CD4-positive, alpha-beta memory T cell (primary cell): ENCODE measurements at regions of chr3 and their contacts with region 1.

Region 1: GRCh38 chr3:185942907-185943759 is 5.3 kb upstream of the TRA2B start:
- DNase-seq: peak; percentile 81 to 84 (median 83)
- H3K4me3 ChIP-seq: peak overlapping the region in 1 of 2 donors; percentile 55
- H3K4me3 Mint-ChIP-seq: peak overlapping the region; percentile 43 to 76 (median 66)
- H3K27ac ChIP-seq: no peak overlapping the region
- H3K27ac Mint-ChIP-seq: peak overlapping the region in 5 of 7 donors; percentile 32 to 75 (median 62)
- H3K4me1 ChIP-seq: peaks cover 14% of the 10 kb centered on the region
- H3K4me1 Mint-ChIP-seq: peaks cover 6 to 24% (median 14%) of the 10 kb centered on the region in 4 donors
- H3K27me3 ChIP-seq: no peaks in the 10 kb centered on the region
- H3K27me3 Mint-ChIP-seq: peaks cover 2 to 3% of the 10 kb centered on the region in 2 donors

Region 2: GRCh38 chr3:185796431-185797107 is 146.6 kb before region 1 on chr3:
- CTCF ChIA-PET with region 1: no interaction called
- POLR2A ChIA-PET with region 1: no interaction called
- intact Hi-C with region 1: no loop called
- DNase-seq: no peak
- H3K4me3 ChIP-seq: no peak overlapping the region
- H3K4me3 Mint-ChIP-seq: no peak overlapping the region
- H3K27ac ChIP-seq: no peak overlapping the region
- H3K27ac Mint-ChIP-seq: no peak overlapping the region
- H3K4me1 ChIP-seq: no peaks in the 10 kb centered on the region
- H3K4me1 Mint-ChIP-seq: peaks cover 0 to 2% (median 0%) of the 10 kb centered on the region in 4 donors
- H3K27me3 ChIP-seq: no peaks in the 10 kb centered on the region
- H3K27me3 Mint-ChIP-seq: peaks cover 9 to 22% of the 10 kb centered on the region in 2 donors

Region 3: GRCh38 chr3:185866555-185866954 is 76.6 kb before region 1 on chr3:
- CTCF ChIA-PET with region 1: no interaction called
- POLR2A ChIA-PET with region 1: no interaction called
- intact Hi-C with region 1: no loop called
- DNase-seq: no peak
- H3K4me3 ChIP-seq: no peak overlapping the region
- H3K4me3 Mint-ChIP-seq: no peak overlapping the region
- H3K27ac ChIP-seq: no peak overlapping the region
- H3K27ac Mint-ChIP-seq: no peak overlapping the region
- H3K4me1 ChIP-seq: no peaks in the 10 kb centered on the region
- H3K4me1 Mint-ChIP-seq: no peaks in the 10 kb centered on the region
- H3K27me3 ChIP-seq: no peaks in the 10 kb centered on the region
- H3K27me3 Mint-ChIP-seq: peaks cover 7 to 11% of the 10 kb centered on the region in 2 donors

Region 4: GRCh38 chr3:185912929-185913901 is 29.9 kb before region 1 on chr3:
- CTCF ChIA-PET with region 1: interaction called, 22 read pairs
- POLR2A ChIA-PET with region 1: interaction called, 35 read pairs
- intact Hi-C with region 1: no loop called
- DNase-seq: no peak
- H3K4me3 ChIP-seq: no peak overlapping the region
- H3K4me3 Mint-ChIP-seq: no peak overlapping the region
- H3K27ac ChIP-seq: no peak overlapping the region
- H3K27ac Mint-ChIP-seq: peak overlapping the region in 4 of 7 donors; percentile 17 to 82 (median 41)
- H3K4me1 ChIP-seq: no peaks in the 10 kb centered on the region
- H3K4me1 Mint-ChIP-seq: peaks cover 4 to 9% (median 7%) of the 10 kb centered on the region in 4 donors
- H3K27me3 ChIP-seq: no peaks in the 10 kb centered on the region
- H3K27me3 Mint-ChIP-seq: no peaks in the 10 kb centered on the region

Region 5: DNA sequence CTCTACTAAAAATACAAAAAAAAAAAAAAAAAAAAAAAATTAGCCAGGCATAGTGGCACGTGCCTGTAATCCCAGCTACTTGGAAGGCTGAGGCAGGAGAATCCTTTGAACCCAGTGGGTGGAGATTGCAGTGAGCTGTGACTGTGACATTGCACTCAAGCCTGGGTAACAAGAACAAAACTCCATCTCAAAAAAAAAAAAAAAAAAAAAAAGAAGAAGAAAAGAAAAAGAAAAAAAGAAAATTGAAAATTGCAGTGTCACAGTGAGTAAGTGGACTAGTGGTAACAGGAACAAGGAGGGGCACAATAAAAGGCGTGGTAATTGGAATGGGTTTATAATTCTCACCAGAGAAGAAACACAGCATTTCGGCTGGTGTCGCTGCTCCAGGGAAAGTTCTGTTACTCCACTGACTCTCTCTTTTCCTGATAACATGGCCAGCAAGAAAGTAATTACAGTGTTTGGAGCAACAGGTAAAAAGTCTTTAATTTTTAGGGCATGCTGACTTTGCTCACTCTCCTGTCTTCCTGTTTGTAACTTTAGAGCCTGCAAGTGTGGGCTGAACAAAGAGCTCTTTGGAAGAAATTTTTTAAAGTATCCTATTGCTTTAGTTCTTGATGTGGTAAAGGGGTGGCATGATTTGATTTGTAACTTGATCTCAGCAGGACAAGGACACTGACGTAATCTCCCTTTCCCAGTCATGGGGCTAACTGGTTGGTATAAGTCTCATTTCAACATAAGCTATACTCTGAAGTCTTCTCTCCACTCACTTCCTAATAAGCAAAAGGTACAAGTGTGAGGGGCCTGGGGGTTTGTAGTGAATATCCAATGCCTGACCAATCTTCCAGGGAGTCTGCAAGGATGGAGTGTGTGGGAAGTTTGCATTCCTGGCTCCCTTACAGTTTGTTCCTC is 16.7 kb after region 1 on chr3:
- CTCF ChIA-PET with region 1: interaction called, 49 read pairs
- POLR2A ChIA-PET with region 1: interaction called, 4 read pairs
- intact Hi-C with region 1: no loop called
- DNase-seq: no peak
- H3K4me3 ChIP-seq: no peak overlapping the region
- H3K4me3 Mint-ChIP-seq: peak overlapping the region in 3 of 8 donors; percentile 8 to 45 (median 35)
- H3K27ac ChIP-seq: no peak overlapping the region
- H3K27ac Mint-ChIP-seq: peak overlapping the region in 2 of 7 donors; percentile 48 to 49
- H3K4me1 ChIP-seq: peaks cover 8% of the 10 kb centered on the region
- H3K4me1 Mint-ChIP-seq: peaks cover 2 to 7% (median 4%) of the 10 kb centered on the region in 4 donors
- H3K27me3 ChIP-seq: peaks cover 5% of the 10 kb centered on the region
- H3K27me3 Mint-ChIP-seq: peaks cover 8 to 13% of the 10 kb centered on the region in 2 donors

Region 6: DNA sequence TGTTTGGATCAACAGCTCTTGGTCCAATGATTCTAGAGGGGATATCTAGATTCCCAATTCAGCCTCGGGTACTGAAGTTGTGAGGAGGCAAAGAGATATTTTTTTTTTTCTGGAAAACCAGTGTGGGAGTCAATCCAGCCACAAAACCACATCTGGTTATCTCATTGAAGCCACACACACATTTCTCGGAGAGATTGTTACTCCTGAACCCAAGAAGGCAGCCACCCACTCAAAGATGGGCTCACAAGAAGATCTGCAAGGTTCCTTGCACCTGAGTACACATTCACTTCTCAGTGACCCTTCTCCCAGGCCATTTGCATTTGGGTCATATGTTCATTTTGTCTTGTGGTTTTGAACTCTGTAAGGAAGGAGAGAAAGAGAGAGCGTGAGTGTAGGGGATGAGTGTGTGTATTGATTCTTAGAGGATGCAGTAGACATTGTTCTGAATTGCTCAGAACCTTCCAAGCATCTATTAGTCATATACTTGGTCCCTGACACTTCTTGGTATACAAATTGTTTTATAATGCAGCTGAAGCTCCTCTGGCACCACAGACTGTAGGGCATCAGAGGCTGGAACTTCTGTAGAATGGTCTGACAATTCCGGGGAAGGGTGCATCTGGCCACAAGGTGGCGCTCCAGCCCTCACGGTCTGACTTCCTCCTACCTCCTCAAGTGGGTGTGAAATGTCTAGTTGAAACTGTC is 34.0 kb after region 1 on chr3:
- CTCF ChIA-PET with region 1: interaction called, 26 read pairs
- POLR2A ChIA-PET with region 1: interaction called, 3 read pairs
- intact Hi-C with region 1: loop called (anchors 2 kb)
- DNase-seq: peak; percentile 61 to 70 (median 65)
- H3K4me3 ChIP-seq: no peak overlapping the region
- H3K4me3 Mint-ChIP-seq: no peak overlapping the region
- H3K27ac ChIP-seq: no peak overlapping the region
- H3K27ac Mint-ChIP-seq: no peak overlapping the region
- H3K4me1 ChIP-seq: no peaks in the 10 kb centered on the region
- H3K4me1 Mint-ChIP-seq: peaks cover 2 to 5% (median 5%) of the 10 kb centered on the region in 4 donors
- H3K27me3 ChIP-seq: no peaks in the 10 kb centered on the region
- H3K27me3 Mint-ChIP-seq: peaks cover 0 to 2% of the 10 kb centered on the region in 2 donors

Region 7: GRCh38 chr3:186564586-186564985 is 621.5 kb after region 1 on chr3:
- CTCF ChIA-PET with region 1: interaction called, 10 read pairs
- POLR2A ChIA-PET with region 1: interaction called, 72 read pairs
- intact Hi-C with region 1: loop called (anchors 1 kb)
- DNase-seq: no peak
- H3K4me3 ChIP-seq: no peak overlapping the region
- H3K4me3 Mint-ChIP-seq: peak overlapping the region in 7 of 8 donors; percentile 1 to 29 (median 3)
- H3K27ac ChIP-seq: no peak overlapping the region
- H3K27ac Mint-ChIP-seq: peak overlapping the region in 2 of 7 donors; percentile 14 to 50
- H3K4me1 ChIP-seq: peaks cover 62% of the 10 kb centered on the region
- H3K4me1 Mint-ChIP-seq: peaks cover 40 to 80% (median 62%) of the 10 kb centered on the region in 4 donors
- H3K27me3 ChIP-seq: no peaks in the 10 kb centered on the region
- H3K27me3 Mint-ChIP-seq: no peaks in the 10 kb centered on the region